Activated B cell treated with CpG ODN at 0.5 μM for 24 hours (primary cell): ENCODE measurements at regions of chr7 and their contacts with region 1.

Region 1: GRCh38 chr7:29408841-29409243 is 154.8 kb upstream of the PRR15 start:
- DNase-seq: no peak
- ATAC-seq: peak; percentile 50
- H3K4me3 Mint-ChIP-seq: no peak overlapping the region
- H3K27ac Mint-ChIP-seq: no peak overlapping the region
- H3K4me1 Mint-ChIP-seq: no peaks in the 10 kb centered on the region
- H3K27me3 Mint-ChIP-seq: peaks cover 6% of the 10 kb centered on the region
- CTCF ChIP-seq: no peak

Region 2: GRCh38 chr7:29105752-29106668 is 302.8 kb before region 1 on chr7:
- CTCF ChIA-PET with region 1: interaction called, 3 read pairs
- POLR2A ChIA-PET with region 1: no interaction called
- intact Hi-C with region 1: loop called (anchors 2 kb)
- DNase-seq: no peak
- ATAC-seq: peak; percentile 45
- H3K4me3 Mint-ChIP-seq: no peak overlapping the region
- H3K27ac Mint-ChIP-seq: no peak overlapping the region
- H3K4me1 Mint-ChIP-seq: no peaks in the 10 kb centered on the region
- H3K27me3 Mint-ChIP-seq: peaks cover 8% of the 10 kb centered on the region
- CTCF ChIP-seq: no peak

Region 3: DNA sequence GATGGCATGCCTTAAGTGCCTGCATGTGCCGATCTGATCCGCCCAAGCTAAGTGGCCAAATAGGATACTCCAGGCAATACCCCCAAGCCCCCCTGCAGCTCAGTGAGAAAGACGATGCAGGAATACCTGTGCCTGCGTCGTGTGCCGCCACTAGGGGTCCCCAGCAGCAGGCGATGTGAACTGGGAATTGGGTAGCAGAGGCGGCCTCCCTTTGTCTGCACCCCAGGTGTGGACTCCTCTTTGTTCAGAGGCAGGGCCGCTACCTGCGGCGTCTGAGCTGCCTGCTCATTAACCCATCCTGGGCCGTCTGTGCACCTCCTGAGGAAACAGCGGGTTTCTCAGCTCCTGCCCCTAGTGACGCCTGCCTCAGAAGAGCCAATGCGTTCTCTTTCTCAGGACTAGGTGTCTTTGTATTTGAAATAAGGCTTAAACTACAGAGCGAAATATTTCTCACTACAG is 219.1 kb before region 1 on chr7:
- CTCF ChIA-PET with region 1: interaction called, 78 read pairs
- POLR2A ChIA-PET with region 1: no interaction called
- intact Hi-C with region 1: loop called (anchors 1 kb)
- DNase-seq: peak; percentile 24
- ATAC-seq: peak; percentile 56
- H3K4me3 Mint-ChIP-seq: no peak overlapping the region
- H3K27ac Mint-ChIP-seq: no peak overlapping the region
- H3K4me1 Mint-ChIP-seq: peaks cover 5% of the 10 kb centered on the region
- H3K27me3 Mint-ChIP-seq: peaks cover 38% of the 10 kb centered on the region
- CTCF ChIP-seq: no peak

Region 4: GRCh38 chr7:29239638-29240037 is 169.2 kb before region 1 on chr7:
- CTCF ChIA-PET with region 1: interaction called, 3 read pairs
- POLR2A ChIA-PET with region 1: no interaction called
- intact Hi-C with region 1: loop called (anchors 2 kb)
- DNase-seq: no peak
- ATAC-seq: no peak
- H3K4me3 Mint-ChIP-seq: no peak overlapping the region
- H3K27ac Mint-ChIP-seq: no peak overlapping the region
- H3K4me1 Mint-ChIP-seq: peaks cover 16% of the 10 kb centered on the region
- H3K27me3 Mint-ChIP-seq: peaks cover 7% of the 10 kb centered on the region
- CTCF ChIP-seq: no peak